ENCODE measurements at regions of chr3 and their contacts with region 1.

Region 1: GRCh38 chr3:7504886-7505775 is 644.2 kb downstream of the GRM7 start:
- DNase-seq: peak; percentile 15 to 23
- ATAC-seq: peak; percentile 47 to 93 (median 81)
- H3K4me3 ChIP-seq: no peak overlapping the region
- H3K27ac ChIP-seq: peak overlapping the region in 9 of 10 donors; percentile 33 to 77 (median 62)
- H3K4me1 ChIP-seq: peaks cover 0 to 15% (median 9%) of the 10 kb centered on the region in 9 donors
- H3K27me3 ChIP-seq: no peaks in the 10 kb centered on the region
- CTCF ChIP-seq: no peak

Region 2: DNA sequence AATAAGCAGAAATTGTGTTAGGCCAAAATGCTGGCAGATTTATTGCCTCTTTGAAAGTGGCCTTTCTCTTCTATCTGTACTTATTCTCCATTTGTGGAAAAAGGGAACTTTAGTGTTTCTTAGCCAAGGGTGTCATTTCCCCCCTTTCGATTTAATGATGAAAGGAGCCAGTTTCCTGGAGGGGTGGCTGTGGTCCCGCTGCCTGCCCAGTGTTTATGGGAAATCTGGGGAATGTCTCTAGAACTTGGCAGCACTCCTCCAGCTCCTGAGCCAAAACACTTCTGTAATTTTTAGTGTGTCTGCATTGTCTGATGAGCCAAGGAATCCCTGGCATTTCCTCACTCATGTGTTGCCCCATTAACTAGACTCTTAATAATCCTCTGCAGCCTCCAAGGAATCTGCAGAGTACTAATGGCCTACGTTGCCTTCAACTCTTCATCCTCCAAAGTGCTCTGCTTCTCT is 195.5 kb before region 1 on chr3:
- intact Hi-C with region 1: loop called in 1 of 10 experiments (anchors 5 kb)
- DNase-seq: peak; percentile 22 to 61
- ATAC-seq: peak; percentile 64 to 97 (median 84)
- H3K4me3 ChIP-seq: no peak overlapping the region
- H3K27ac ChIP-seq: peak overlapping the region in 4 of 10 donors; percentile 1 to 47 (median 23)
- H3K4me1 ChIP-seq: peaks cover 0 to 46% (median 21%) of the 10 kb centered on the region in 9 donors
- H3K27me3 ChIP-seq: no peaks in the 10 kb centered on the region
- CTCF ChIP-seq: no peak

Region 3: DNA sequence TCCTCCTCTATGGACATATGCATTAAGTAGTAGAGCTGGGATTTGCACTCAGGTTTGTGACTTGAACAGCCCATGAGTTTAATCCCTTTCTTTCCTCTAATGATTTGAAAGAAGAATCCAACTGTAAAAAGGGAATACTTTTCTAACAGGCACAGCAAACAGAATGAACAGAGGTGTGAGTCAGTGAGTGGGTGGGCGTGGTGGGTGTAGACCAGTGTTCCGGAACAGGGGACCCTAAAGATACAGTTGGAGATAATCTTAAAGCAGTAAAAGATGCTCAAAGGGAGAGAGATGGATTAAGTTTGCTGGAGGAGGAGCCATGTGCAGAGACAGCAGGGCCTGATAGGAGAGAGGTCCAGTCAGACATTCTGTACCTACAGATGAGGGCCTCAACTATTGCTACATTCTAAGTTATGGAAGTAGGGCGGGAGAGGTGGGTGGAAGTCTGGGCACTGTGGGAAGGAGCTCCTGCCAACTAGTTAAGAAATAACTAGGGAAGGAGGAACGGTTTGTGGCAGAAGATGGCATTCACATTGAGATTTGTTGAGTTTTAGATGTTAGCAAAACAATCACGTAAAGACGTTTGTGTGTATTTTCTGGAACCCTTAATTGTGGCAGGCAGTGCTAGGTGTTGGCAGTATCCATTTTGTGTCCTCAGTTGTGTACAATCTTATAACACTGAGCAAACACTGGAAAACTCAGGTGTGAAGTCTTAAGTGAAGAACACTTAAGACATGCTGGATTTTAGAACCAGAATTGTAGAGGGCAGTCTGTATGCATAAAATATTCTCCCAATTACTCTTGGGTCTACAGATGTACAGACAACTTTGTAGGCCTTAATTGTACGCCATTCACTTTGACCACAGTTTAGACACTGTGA is 133.2 kb before region 1 on chr3:
- intact Hi-C with region 1: no loop called
- DNase-seq: no peak
- ATAC-seq: no peak
- H3K4me3 ChIP-seq: no peak overlapping the region
- H3K27ac ChIP-seq: no peak overlapping the region
- H3K4me1 ChIP-seq: no peaks in the 10 kb centered on the region
- H3K27me3 ChIP-seq: no peaks in the 10 kb centered on the region
- CTCF ChIP-seq: no peak

Region 4: GRCh38 chr3:8359133-8359532 is 854.0 kb after region 1 on chr3:
- intact Hi-C with region 1: no loop called
- DNase-seq: no peak
- ATAC-seq: no peak
- H3K4me3 ChIP-seq: no peak overlapping the region
- H3K27ac ChIP-seq: no peak overlapping the region
- H3K4me1 ChIP-seq: peaks cover 0 to 16% (median 0%) of the 10 kb centered on the region in 9 donors
- H3K27me3 ChIP-seq: no peaks in the 10 kb centered on the region
- CTCF ChIP-seq: no peak